HCT116 (cell line): ENCODE measurements at regions of chr7 and their contacts with region 1.

Region 1: DNA sequence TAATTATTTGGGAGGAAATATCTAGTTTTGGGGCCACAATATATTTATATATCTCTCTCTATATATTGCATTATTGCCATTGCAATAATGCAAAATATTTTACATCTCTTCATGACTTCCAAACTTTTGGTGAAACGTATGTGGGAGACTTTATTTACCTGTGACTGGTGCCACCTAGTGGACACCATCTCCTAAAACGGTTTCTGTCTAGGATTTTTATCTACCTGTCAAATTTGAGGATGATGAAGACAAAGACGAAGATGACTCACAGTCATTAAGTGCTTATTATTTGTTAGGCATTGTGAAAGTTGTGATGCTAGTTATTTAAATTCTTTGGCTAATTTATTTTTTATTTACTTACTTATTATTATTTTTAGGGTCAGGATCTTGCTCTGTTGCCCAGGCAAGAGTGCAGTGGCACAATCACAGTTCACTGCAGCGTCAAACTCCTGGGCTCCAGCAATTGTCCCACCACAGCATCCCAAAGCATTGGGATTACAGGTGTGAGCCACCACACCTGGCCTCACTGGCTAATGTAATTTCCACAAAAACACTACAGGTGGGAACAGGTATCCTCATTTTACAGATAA is 18.7 kb upstream of the CBLL1 start:
- DNase-seq: peak; percentile 49
- ATAC-seq: 0 out of 2 replicates have a peak, but pooled peaks have one; percentile 42
- H3K4me3 ChIP-seq: no peak overlapping the region
- H3K27ac ChIP-seq: no peak overlapping the region
- H3K4me1 ChIP-seq: no peaks in the 10 kb centered on the region
- H3K27me3 ChIP-seq: peaks cover 8% of the 10 kb centered on the region; the same call in 1 of the 2 replicates
- CTCF ChIP-seq: peak; percentile 58 to 78 (median 75)
- POLR2A ChIP-seq: no peak
- RAD21 ChIP-seq: peak; percentile 82

Region 2: GRCh38 chr7:106793015-106793975 is 932.0 kb before region 1 on chr7:
- CTCF ChIA-PET with region 1: no interaction called
- POLR2A ChIA-PET with region 1: no interaction called
- RAD21 ChIA-PET with region 1: no interaction called
- intact Hi-C with region 1: loop called (anchors 10 kb)
- DNase-seq: peak; percentile 38
- ATAC-seq: peak; percentile 69
- H3K4me3 ChIP-seq: no peak overlapping the region
- H3K27ac ChIP-seq: no peak overlapping the region
- H3K4me1 ChIP-seq: no peaks in the 10 kb centered on the region
- H3K27me3 ChIP-seq: no peaks in the 10 kb centered on the region
- CTCF ChIP-seq: peak; percentile 57 to 78 (median 70); a peak in 5 of 6 replicates
- POLR2A ChIP-seq: no peak
- RAD21 ChIP-seq: peak; percentile 89

Region 3: GRCh38 chr7:106947244-106947728 is 778.0 kb before region 1 on chr7:
- CTCF ChIA-PET with region 1: no interaction called
- POLR2A ChIA-PET with region 1: no interaction called
- RAD21 ChIA-PET with region 1: no interaction called
- intact Hi-C with region 1: loop called (anchors 10 kb)
- DNase-seq: peak; percentile 68
- ATAC-seq: peak; percentile 97
- H3K4me3 ChIP-seq: no peak overlapping the region
- H3K27ac ChIP-seq: no peak overlapping the region
- H3K4me1 ChIP-seq: no peaks in the 10 kb centered on the region
- H3K27me3 ChIP-seq: no peaks in the 10 kb centered on the region
- CTCF ChIP-seq: peak; percentile 67 to 78 (median 73)
- POLR2A ChIP-seq: no peak
- RAD21 ChIP-seq: peak; percentile 87

Region 4: DNA sequence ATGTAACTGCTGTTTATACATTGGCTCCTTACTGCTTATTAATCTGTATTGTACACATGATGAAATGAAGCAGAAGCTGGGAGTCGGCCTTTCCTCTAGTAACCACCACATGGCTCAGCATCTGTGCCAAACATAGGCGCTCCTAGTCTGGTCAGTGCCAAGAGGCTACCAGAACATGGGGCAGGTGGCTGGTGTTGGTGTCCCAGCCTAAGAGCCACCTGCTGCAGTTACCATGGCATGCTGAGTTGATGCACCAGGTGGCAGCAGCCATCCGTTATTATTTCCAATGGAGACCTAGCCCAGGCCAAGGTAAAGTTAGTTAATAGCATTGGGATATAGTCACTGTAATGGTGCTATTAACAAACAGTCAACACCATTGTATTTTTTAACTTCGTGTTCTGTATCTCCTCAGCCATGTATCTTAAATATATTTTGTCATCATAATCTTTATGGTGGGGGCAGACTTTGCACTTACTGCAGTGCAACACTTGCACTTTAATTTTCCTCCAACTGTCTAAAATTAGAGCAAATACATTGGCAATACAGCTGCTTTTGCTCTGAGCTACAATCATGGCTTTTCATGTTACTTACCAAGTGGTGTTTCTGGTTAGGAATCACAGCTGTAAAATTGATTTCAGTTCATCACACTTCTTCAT is 523.3 kb before region 1 on chr7:
- CTCF ChIA-PET with region 1: no interaction called
- POLR2A ChIA-PET with region 1: no interaction called
- RAD21 ChIA-PET with region 1: no interaction called
- intact Hi-C with region 1: loop called (anchors 1 kb)
- DNase-seq: peak; percentile 23
- ATAC-seq: peak; percentile 98
- H3K4me3 ChIP-seq: no peak overlapping the region
- H3K27ac ChIP-seq: no peak overlapping the region
- H3K4me1 ChIP-seq: no peaks in the 10 kb centered on the region
- H3K27me3 ChIP-seq: no peaks in the 10 kb centered on the region
- CTCF ChIP-seq: peak; percentile 41 to 72 (median 69); a peak in 5 of 6 replicates
- POLR2A ChIP-seq: no peak
- RAD21 ChIP-seq: peak; percentile 70

Region 5: GRCh38 chr7:107462740-107463444 is 262.4 kb before region 1 on chr7:
- CTCF ChIA-PET with region 1: interaction called, 15 read pairs
- POLR2A ChIA-PET with region 1: no interaction called
- RAD21 ChIA-PET with region 1: no interaction called
- intact Hi-C with region 1: loop called (anchors 1 kb)
- DNase-seq: peak; percentile 21
- ATAC-seq: peak; percentile 95
- H3K4me3 ChIP-seq: no peak overlapping the region
- H3K27ac ChIP-seq: no peak overlapping the region
- H3K4me1 ChIP-seq: no peaks in the 10 kb centered on the region
- H3K27me3 ChIP-seq: no peaks in the 10 kb centered on the region
- CTCF ChIP-seq: peak; percentile 66 to 76 (median 74)
- POLR2A ChIP-seq: no peak
- RAD21 ChIP-seq: peak; percentile 92

Region 6: GRCh38 chr7:107579885-107580715 is 145.1 kb before region 1 on chr7 and contains the start of gene BCAP29:
- CTCF ChIA-PET with region 1: no interaction called
- POLR2A ChIA-PET with region 1: no interaction called
- RAD21 ChIA-PET with region 1: no interaction called
- intact Hi-C with region 1: loop called (anchors 10 kb)
- DNase-seq: peak; percentile 38
- ATAC-seq: peak; percentile 94
- H3K4me3 ChIP-seq: peak within 1 kb of the TSS; percentile 76 to 82
- H3K27ac ChIP-seq: peak within 1 kb of the TSS; percentile 81
- H3K4me1 ChIP-seq: peaks cover 2 to 14% of the 10 kb centered on the region in 2 experiments; a peak in 3 of 4 replicates
- H3K27me3 ChIP-seq: no peaks in the 10 kb centered on the region
- CTCF ChIP-seq: peak in 1 of 3 experiments; percentile 28; a peak in 3 of 6 replicates
- POLR2A ChIP-seq: peak; percentile 47
- RAD21 ChIP-seq: peak; percentile 31; the same call in 1 of the 2 replicates
- total RNA-seq, gene BCAP29: 43.2 TPM

Region 7: GRCh38 chr7:107836237-107837144 is 111.2 kb after region 1 on chr7:
- CTCF ChIA-PET with region 1: no interaction called
- POLR2A ChIA-PET with region 1: no interaction called
- RAD21 ChIA-PET with region 1: no interaction called
- intact Hi-C with region 1: no loop called
- DNase-seq: peak; percentile 31
- ATAC-seq: peak; percentile 89
- H3K4me3 ChIP-seq: no peak overlapping the region
- H3K27ac ChIP-seq: no peak overlapping the region
- H3K4me1 ChIP-seq: peaks cover 8 to 10% of the 10 kb centered on the region in 2 experiments; a peak in 3 of 4 replicates
- H3K27me3 ChIP-seq: no peaks in the 10 kb centered on the region
- CTCF ChIP-seq: no peak
- POLR2A ChIP-seq: no peak
- RAD21 ChIP-seq: no peak